Activated naive CD4-positive, alpha-beta T cell treated with anti-CD3 and anti-CD28 coated beads for 36 hours (primary cell): ENCODE measurements at regions of chrX and their contacts with region 1.

Region 1: DNA sequence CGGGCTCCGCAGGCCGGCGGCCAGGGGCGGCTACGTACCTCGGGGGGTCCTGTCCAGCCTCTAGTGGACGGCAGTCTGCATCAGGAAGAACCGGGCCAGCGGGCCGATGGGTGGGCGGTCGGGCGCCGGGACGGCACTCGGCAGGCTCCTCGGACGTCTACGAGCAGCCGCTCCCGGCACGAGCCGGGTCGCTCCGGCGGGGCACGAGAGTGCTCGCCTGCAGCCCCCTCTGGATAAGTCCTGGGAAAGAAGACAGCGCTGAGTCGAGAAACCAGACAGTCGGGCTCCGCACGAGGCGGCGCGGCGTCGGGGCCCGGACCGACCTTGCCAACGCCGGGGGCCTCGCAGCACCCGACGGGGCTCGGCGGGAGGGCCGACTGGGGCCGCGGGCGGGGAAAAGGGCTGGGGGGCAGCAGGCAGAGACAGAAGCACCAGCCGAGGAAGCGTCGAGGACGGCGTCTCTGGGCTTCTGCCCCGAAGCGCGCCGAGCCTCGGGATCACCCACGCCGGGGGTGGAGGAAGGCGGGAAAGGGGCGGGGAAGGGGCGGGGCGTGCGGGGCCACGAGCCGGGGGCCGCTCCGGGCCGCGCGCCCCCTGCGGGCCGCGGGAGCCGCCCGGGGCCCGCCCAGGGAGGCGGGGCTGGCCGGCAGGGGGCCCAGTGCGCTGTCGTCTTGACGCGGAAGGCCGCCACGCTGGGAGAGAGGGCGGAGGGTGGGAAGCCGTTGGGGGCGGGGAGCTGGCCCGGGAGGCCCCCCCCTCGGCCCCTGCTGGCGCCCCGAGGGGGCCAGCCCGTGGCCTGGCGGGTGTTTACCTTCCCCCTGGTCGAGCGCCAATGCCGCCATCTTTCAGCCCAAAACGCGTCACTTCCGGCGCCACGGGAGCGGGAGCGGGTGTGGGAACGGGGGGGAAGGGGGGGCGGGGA is 1.9 kb downstream of the KLHL15 start:
- DNase-seq: peak; percentile 89
- H3K4me3 Mint-ChIP-seq: peak overlapping the region; percentile 85
- H3K27ac Mint-ChIP-seq: peak overlapping the region; percentile 71
- H3K4me1 Mint-ChIP-seq: peaks cover 20% of the 10 kb centered on the region
- H3K27me3 Mint-ChIP-seq: no peaks in the 10 kb centered on the region

Region 2: DNA sequence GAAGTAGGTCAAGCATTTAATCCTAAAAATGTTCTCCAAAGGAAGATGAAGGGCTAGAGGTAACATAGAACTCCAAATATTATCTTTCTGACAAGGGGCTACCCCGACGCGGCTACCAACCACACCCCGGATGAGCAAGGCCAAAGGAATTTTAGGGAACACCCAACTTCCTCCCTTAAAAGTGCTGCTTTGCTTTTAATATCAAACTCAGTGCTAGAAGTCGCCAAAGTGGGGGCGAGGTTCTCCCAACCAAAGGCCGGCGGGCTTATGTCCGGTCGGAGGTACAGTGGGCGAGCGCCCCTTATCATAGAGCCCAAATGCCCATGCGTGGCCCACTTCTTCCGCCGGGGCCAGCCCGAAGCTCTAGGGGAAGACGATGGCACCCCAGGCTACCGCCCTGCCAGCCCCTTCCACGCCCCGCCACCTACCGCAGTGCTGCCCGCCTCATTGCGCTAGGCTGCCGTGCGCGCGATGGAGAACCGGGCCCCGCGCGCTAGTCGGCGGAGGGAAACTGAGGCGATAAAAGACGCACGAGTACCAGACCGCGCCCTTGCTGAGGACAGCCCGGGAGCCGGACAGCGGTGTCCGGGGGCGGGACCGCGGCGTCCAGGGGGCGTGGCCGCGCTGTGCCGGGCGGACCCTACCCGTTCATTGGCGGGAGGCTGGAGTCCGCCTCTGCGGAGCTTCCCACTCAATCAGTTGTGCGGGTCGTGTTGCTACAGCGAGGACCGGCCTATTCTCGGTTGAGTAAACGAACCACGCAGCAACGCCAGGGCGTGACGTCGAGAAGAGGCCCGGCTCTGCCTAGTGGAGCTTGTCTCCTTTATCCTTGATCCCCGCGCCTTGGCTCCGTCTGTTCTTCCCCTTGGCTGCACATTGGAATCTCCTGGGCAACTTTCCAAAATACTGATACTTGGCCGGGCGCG is 282.1 kb before region 1 on chrX and contains the start of gene ACOT9:
- CTCF ChIA-PET with region 1: no interaction called
- intact Hi-C with region 1: loop called (anchors 2 kb)
- DNase-seq: peak; percentile 85
- H3K4me3 Mint-ChIP-seq: peak within 1 kb of the TSS; percentile 83
- H3K27ac Mint-ChIP-seq: peak within 1 kb of the TSS; percentile 84
- H3K4me1 Mint-ChIP-seq: peaks cover 23% of the 10 kb centered on the region
- H3K27me3 Mint-ChIP-seq: no peaks in the 10 kb centered on the region
- total RNA-seq, gene ACOT9: 46.8 to 49.7 TPM

Region 3: DNA sequence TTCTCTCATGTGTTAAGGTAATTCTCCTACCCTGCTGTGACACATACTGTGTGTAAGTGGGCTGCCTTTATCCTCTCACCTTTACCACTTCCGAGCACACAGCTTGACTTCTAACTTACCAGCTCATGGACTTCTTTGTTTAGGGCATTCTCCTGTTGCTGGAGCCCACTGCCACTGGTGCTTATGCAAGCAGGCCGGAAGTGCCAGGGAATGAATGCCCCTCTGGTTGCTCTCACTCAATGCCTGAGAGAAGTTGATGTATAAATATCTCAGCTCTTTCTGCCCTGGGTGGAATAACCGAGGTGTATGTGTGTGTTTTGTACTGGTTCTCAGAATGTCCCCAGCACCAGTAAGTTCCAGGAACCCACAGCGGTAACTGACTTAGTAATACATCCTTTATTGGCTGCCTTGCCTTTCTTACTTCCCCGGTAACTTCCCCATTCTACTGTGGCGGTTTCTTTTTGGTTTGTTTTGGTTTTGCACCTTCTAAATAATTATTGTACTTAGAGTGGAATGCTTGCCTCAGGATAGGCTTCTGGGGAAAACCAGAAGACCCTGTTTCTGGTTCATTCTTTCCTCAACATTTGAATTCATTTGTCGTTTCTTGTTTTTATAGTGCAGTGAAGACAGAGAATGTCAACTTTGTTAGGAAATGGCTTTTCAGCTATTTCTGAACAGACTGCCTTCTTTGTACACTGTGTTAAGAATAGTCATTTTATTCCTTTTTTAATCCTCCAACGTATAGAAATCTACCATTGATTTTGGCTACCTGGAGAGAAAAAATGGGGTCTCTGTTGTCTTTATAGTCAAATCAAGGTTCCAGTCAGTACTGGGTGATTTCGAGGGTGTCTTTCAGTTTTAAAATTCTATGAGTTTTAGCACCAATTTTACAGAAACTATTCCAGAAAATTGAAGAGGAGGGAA is 71.8 kb before region 1 on chrX:
- CTCF ChIA-PET with region 1: interaction called, 3 read pairs
- intact Hi-C with region 1: loop called (anchors 1 kb)
- DNase-seq: peak; percentile 70
- H3K4me3 Mint-ChIP-seq: peak overlapping the region; percentile 79
- H3K27ac Mint-ChIP-seq: peak overlapping the region; percentile 97
- H3K4me1 Mint-ChIP-seq: peaks cover 16% of the 10 kb centered on the region
- H3K27me3 Mint-ChIP-seq: no peaks in the 10 kb centered on the region

Region 4: GRCh38 chrX:23993012-23993633 is 32.0 kb before region 1 on chrX:
- CTCF ChIA-PET with region 1: interaction called, 4 read pairs
- intact Hi-C with region 1: loop called (anchors 2 kb)
- DNase-seq: peak; percentile 14
- H3K4me3 Mint-ChIP-seq: no peak overlapping the region
- H3K27ac Mint-ChIP-seq: peak overlapping the region; percentile 83
- H3K4me1 Mint-ChIP-seq: peaks cover 38% of the 10 kb centered on the region
- H3K27me3 Mint-ChIP-seq: no peaks in the 10 kb centered on the region

Region 5: GRCh38 chrX:24005028-24005427 is 20.1 kb before region 1 on chrX:
- CTCF ChIA-PET with region 1: no interaction called
- intact Hi-C with region 1: no loop called
- DNase-seq: no peak
- H3K4me3 Mint-ChIP-seq: no peak overlapping the region
- H3K27ac Mint-ChIP-seq: no peak overlapping the region
- H3K4me1 Mint-ChIP-seq: peaks cover 37% of the 10 kb centered on the region
- H3K27me3 Mint-ChIP-seq: no peaks in the 10 kb centered on the region

Region 6: GRCh38 chrX:24054182-24055042 is 29.3 kb after region 1 on chrX and contains the start of gene EIF2S3:
- CTCF ChIA-PET with region 1: interaction called, 13 read pairs
- intact Hi-C with region 1: loop called (anchors 1 kb)
- DNase-seq: peak; percentile 87
- H3K4me3 Mint-ChIP-seq: no peak within 1 kb of the TSS
- H3K27ac Mint-ChIP-seq: no peak within 1 kb of the TSS
- H3K4me1 Mint-ChIP-seq: peaks cover 10% of the 10 kb centered on the region
- H3K27me3 Mint-ChIP-seq: no peaks in the 10 kb centered on the region
- total RNA-seq, gene EIF2S3: 366 to 386 TPM

Region 7: GRCh38 chrX:24069877-24070276 is 44.8 kb after region 1 on chrX:
- CTCF ChIA-PET with region 1: no interaction called
- intact Hi-C with region 1: no loop called
- DNase-seq: no peak
- H3K4me3 Mint-ChIP-seq: no peak overlapping the region
- H3K27ac Mint-ChIP-seq: no peak overlapping the region
- H3K4me1 Mint-ChIP-seq: peaks cover 3% of the 10 kb centered on the region
- H3K27me3 Mint-ChIP-seq: no peaks in the 10 kb centered on the region

Region 8: DNA sequence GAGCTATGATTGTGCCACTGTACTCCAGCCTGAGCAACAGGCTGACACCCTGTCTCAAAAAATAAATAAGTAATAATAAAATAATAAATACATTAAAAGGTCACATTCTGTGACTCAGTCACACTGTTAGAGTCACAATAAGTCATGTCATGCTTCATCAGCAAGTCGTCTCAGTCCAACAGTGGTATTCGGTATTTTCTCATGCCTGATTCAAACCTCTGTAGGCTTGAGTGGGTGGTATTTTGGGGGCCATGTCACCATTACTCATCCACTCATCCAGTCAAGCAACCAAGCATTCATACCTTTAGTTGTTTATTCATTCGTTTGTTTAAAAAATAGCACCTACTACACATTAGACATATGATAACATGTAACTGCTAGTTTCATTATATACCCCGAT is 241.9 kb after region 1 on chrX:
- CTCF ChIA-PET with region 1: no interaction called
- intact Hi-C with region 1: no loop called
- DNase-seq: no peak
- H3K4me3 Mint-ChIP-seq: no peak overlapping the region
- H3K27ac Mint-ChIP-seq: no peak overlapping the region
- H3K4me1 Mint-ChIP-seq: peaks cover 7% of the 10 kb centered on the region
- H3K27me3 Mint-ChIP-seq: peaks cover 4% of the 10 kb centered on the region